Activated naive CD4-positive, alpha-beta T cell treated with anti-CD3 and anti-CD28 coated beads, Interleukin-2, amount 10 ng/mL, durations not matched to agents 7 days and 5 days (primary cell): ENCODE measurements at regions of chr2 and their contacts with region 1.

Region 1: GRCh38 chr2:237744613-237745249 is 53.8 kb upstream of the RBM44 start:
- DNase-seq: peak; percentile 80
- H3K4me3 Mint-ChIP-seq: no peak overlapping the region
- H3K27ac Mint-ChIP-seq: peak overlapping the region; percentile 54
- H3K4me1 Mint-ChIP-seq: peaks cover 22% of the 10 kb centered on the region
- H3K27me3 Mint-ChIP-seq: no peaks in the 10 kb centered on the region

Region 2: GRCh38 chr2:237581751-237582746 is 162.7 kb before region 1 on chr2:
- CTCF ChIA-PET with region 1: interaction called, 64 read pairs
- DNase-seq: peak; percentile 67
- H3K4me3 Mint-ChIP-seq: no peak overlapping the region
- H3K27ac Mint-ChIP-seq: no peak overlapping the region
- H3K4me1 Mint-ChIP-seq: peaks cover 6% of the 10 kb centered on the region
- H3K27me3 Mint-ChIP-seq: peaks cover 13% of the 10 kb centered on the region

Region 3: GRCh38 chr2:237731663-237732062 is 13.1 kb before region 1 on chr2:
- CTCF ChIA-PET with region 1: interaction called, 17 read pairs
- DNase-seq: no peak
- H3K4me3 Mint-ChIP-seq: no peak overlapping the region
- H3K27ac Mint-ChIP-seq: peak overlapping the region; percentile 24
- H3K4me1 Mint-ChIP-seq: peaks cover 28% of the 10 kb centered on the region
- H3K27me3 Mint-ChIP-seq: no peaks in the 10 kb centered on the region

Region 4: GRCh38 chr2:237824085-237824484 is 79.4 kb after region 1 on chr2:
- CTCF ChIA-PET with region 1: no interaction called
- DNase-seq: no peak
- H3K4me3 Mint-ChIP-seq: no peak overlapping the region
- H3K27ac Mint-ChIP-seq: no peak overlapping the region
- H3K4me1 Mint-ChIP-seq: no peaks in the 10 kb centered on the region
- H3K27me3 Mint-ChIP-seq: no peaks in the 10 kb centered on the region

Region 5: DNA sequence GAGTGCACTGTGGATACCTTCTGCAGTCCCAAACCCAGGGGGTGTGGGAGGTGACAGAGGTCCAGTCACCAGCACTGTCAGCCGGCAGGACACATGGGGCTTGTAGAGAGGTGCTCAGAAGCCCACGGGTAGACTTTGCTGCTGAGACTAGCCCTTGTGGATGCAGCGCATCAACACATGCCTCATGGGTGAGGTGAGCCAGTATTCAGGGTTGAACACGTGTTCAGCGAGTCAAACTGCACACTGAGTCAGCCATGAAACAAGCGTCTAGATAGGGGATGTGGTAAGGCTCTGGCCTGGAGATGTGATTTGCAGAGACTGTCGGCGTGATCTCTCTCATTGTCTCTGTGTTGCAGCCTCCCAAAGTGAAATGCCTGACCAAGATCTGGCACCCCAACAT is 280.3 kb after region 1 on chr2:
- CTCF ChIA-PET with region 1: no interaction called
- DNase-seq: peak; percentile 25
- H3K4me3 Mint-ChIP-seq: no peak overlapping the region
- H3K27ac Mint-ChIP-seq: peak overlapping the region; percentile 9
- H3K4me1 Mint-ChIP-seq: peaks cover 8% of the 10 kb centered on the region
- H3K27me3 Mint-ChIP-seq: no peaks in the 10 kb centered on the region

Region 6: DNA sequence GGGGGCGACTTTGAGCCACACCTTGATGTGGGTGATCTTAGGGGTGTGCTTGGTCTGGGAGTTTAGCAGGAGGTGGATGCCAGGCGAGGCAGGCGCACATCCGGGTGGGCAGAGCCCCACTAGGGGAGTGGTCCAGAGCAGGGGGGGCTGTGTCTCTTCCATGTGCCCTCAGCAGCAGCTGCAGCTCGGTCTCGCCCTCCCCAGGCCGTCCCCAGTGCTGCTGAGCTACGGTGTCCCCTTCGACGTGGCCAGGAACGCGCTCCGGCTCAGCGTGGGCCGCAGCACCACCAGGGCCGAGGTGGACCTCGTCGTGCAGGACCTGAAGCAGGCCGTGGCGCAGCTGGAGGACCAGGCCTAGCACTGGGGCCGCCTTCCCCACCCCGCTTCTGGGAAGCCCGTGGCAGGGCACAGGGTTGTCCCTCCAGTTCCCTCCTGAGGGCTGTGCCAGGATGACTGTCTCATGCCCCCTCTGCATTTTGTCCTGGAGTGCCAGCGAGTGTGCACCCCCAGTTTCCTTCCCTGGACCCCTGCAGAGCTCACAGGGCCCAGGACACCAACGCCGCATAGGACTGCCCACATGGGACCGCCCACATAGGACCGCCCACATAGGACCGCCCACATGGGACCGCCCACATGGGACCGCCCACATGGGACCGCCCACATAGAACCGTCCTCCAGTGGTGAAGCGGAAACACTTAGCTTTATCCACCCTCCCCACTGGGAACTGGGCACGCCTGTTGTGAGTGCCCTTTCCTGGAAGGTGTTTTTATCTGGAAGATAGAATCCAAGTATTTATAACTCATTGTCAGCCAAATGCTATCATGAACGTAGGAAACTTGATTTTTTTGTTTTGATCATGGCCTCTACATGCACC is 353.5 kb after region 1 on chr2:
- CTCF ChIA-PET with region 1: no interaction called
- DNase-seq: peak; percentile 21
- H3K4me3 Mint-ChIP-seq: no peak overlapping the region
- H3K27ac Mint-ChIP-seq: no peak overlapping the region
- H3K4me1 Mint-ChIP-seq: no peaks in the 10 kb centered on the region
- H3K27me3 Mint-ChIP-seq: no peaks in the 10 kb centered on the region